Panc1 (cell line): ENCODE measurements at regions of chr3 and their contacts with region 1.

Region 1: DNA sequence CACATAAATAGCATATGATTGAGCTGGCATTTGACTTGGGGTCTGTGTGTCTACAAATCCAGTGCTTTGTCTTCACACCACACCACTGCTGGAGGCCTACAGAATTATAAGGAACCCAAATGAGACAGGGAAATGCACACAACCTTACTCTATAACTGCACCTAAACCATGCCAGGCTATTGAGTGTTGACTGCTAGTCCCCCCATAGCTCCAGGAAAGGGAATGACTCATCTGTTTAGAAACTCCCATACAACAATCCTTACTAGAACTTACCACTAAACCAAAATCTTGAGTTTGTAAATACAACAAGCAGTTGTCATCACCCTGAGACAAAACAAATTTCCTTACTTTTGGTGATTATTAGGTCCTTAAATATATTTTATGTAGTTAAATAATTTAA is 16.9 kb upstream of the TSC22D2 start:
- DNase-seq: no peak
- ATAC-seq: peak; percentile 71
- H3K4me3 ChIP-seq: no peak overlapping the region
- H3K27ac ChIP-seq: no peak overlapping the region
- H3K4me1 ChIP-seq: no peaks in the 10 kb centered on the region; the same call in 1 of the 2 replicates
- H3K27me3 ChIP-seq: no peaks in the 10 kb centered on the region
- CTCF ChIP-seq: no peak

Region 2: GRCh38 chr3:150254309-150254708 is 136.9 kb before region 1 on chr3:
- CTCF ChIA-PET with region 1: no interaction called
- POLR2A ChIA-PET with region 1: interaction called, 10 read pairs
- in situ Hi-C with region 1: no loop called
- intact Hi-C with region 1: no loop called
- DNase-seq: no peak
- ATAC-seq: no peak
- H3K4me3 ChIP-seq: no peak overlapping the region
- H3K27ac ChIP-seq: no peak overlapping the region
- H3K4me1 ChIP-seq: peaks cover 19% of the 10 kb centered on the region
- H3K27me3 ChIP-seq: no peaks in the 10 kb centered on the region
- CTCF ChIP-seq: no peak

Region 3: GRCh38 chr3:150335631-150336030 is 55.6 kb before region 1 on chr3:
- CTCF ChIA-PET with region 1: no interaction called
- POLR2A ChIA-PET with region 1: no interaction called
- in situ Hi-C with region 1: no loop called
- intact Hi-C with region 1: no loop called
- DNase-seq: no peak
- ATAC-seq: no peak
- H3K4me3 ChIP-seq: no peak overlapping the region
- H3K27ac ChIP-seq: peak overlapping the region; percentile 51; the same call in 1 of the 2 replicates
- H3K4me1 ChIP-seq: peaks cover 13% of the 10 kb centered on the region
- H3K27me3 ChIP-seq: no peaks in the 10 kb centered on the region
- CTCF ChIP-seq: no peak